Activated naive CD4-positive, alpha-beta T cell treated with anti-CD3 and anti-CD28 coated beads for 36 hours (primary cell): ENCODE measurements at regions of chrX and their contacts with region 1.

Region 1: DNA sequence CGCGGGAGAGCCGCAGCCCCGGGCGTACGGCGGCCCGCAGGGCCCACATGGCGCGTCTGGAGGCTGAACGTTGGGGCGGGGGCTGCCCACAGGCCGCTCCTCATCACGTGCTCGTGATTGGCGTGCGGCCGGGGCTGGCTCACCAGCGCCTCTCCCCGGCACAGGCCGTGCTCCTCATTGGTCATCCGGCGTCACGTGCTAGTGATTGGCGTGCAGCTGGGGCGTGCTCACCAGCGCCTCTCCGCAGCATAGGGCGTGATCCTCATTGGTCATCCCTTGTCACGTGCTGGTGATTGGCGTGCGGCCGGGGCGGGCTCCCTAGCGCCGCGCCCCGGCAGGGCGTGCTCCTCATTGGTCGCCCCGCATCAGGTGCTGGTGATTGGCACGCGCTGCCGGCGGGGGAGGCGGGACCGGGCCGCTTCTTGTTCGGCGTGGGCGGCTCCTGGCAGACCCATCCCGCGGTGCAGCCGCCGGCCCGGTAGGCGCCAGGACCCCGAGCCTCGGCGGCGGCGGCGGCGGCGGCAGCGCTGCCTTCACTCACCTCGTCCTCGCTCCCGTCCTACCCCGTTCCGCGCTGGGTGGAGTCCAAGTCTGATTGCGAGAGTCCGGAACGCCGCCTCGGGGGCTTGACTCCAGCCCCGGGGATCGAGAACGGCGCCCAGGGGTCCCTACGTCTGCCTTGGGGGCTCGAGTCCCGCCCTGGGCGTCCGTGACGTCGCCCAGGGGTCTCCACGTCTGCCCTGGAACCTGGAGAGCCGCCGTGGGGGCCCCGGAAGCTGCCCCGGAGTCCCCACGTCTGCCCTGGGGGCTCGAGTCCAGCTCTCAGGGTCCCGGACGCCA is at the start of gene GTPBP6:
- DNase-seq: peak; percentile 99
- H3K4me3 Mint-ChIP-seq: peak within 1 kb of the TSS; percentile 90
- H3K27ac Mint-ChIP-seq: peak within 1 kb of the TSS; percentile 98
- H3K4me1 Mint-ChIP-seq: peaks cover 18% of the 10 kb centered on the region
- H3K27me3 Mint-ChIP-seq: no peaks in the 10 kb centered on the region
- total RNA-seq, gene GTPBP6: 63.4 to 64.6 TPM

Region 2: DNA sequence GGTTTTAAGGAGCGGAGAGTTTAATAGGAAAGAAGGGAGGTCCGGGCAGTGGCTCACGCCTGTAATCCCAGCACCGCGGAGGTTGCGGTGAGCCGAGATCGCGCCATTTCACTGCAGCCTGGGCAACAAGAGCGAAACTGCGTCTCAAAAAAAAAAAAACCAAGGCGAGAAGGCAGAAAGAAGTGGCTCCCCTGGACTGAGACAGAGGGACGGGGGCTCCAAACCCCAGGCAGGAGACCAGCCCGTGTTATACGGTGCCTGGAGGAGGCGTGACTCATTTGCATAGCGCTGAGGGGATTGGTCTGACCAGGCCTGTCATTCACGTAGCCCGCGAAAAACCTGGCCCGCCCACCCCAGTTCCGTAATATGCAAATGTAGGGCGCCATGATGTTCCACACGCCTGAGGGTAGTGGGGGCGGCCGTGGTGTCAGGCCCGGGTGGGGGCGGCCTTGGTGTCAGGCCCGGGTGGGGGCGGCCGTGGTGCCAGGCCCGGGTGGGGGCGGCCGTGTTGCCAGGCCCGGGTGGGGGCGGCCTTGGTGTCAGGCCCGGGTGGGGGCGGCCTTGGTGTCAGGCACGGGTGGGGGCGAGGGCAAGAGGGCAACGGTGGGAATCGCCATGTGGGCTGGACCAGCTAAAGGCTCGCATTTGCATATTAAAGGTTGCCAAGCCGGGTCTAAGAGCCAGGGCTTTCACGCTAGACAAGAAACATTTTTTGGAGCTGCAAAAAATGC is 35.7 kb before region 1 on chrX:
- CTCF ChIA-PET with region 1: no interaction called
- intact Hi-C with region 1: loop called (anchors 1 kb)
- DNase-seq: peak; percentile 96
- H3K4me3 Mint-ChIP-seq: peak overlapping the region; percentile 96
- H3K27ac Mint-ChIP-seq: peak overlapping the region; percentile 98
- H3K4me1 Mint-ChIP-seq: peaks cover 34% of the 10 kb centered on the region
- H3K27me3 Mint-ChIP-seq: no peaks in the 10 kb centered on the region

Region 3: DNA sequence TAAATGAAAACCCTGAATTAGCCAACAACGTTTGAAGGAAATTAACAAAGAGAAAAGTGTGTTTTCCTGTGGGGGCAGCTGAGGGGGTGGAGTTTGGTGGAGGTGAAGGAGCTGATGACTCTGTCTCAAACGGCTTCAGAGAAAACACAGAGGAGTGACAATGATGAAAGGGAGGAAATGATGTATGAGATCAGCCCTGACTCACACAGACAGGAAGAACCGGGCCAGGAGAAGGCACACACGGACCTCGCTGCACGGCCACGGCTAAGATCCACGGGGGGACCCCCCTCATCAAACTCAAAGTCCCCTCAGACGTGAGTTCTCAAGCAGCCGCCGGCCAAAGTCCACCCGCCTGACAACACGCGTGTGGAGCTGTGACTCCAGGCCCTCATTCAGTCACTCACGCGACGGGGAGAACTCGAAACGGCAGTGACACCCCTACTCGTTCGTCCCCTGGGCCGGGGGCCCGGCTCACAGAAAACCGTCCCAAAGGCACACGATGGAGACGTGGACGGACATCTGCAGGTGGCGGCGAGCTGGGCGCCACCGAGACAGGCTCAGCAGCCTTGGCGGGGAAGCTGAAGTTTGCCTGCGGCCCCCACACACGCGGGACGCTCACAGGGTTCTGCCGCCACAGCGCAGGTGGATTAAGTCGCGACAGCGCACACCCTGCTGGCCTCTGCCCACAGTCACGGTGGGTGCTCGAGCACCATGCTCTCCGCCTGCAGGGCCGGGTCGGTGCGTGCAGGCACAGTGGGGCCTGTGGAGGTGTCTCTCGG is 38.9 kb after region 1 on chrX:
- CTCF ChIA-PET with region 1: no interaction called
- intact Hi-C with region 1: loop called (anchors 2 kb)
- DNase-seq: peak; percentile 72
- H3K4me3 Mint-ChIP-seq: peak overlapping the region; percentile 65
- H3K27ac Mint-ChIP-seq: peak overlapping the region; percentile 98
- H3K4me1 Mint-ChIP-seq: peaks cover 28% of the 10 kb centered on the region
- H3K27me3 Mint-ChIP-seq: no peaks in the 10 kb centered on the region

Region 4: DNA sequence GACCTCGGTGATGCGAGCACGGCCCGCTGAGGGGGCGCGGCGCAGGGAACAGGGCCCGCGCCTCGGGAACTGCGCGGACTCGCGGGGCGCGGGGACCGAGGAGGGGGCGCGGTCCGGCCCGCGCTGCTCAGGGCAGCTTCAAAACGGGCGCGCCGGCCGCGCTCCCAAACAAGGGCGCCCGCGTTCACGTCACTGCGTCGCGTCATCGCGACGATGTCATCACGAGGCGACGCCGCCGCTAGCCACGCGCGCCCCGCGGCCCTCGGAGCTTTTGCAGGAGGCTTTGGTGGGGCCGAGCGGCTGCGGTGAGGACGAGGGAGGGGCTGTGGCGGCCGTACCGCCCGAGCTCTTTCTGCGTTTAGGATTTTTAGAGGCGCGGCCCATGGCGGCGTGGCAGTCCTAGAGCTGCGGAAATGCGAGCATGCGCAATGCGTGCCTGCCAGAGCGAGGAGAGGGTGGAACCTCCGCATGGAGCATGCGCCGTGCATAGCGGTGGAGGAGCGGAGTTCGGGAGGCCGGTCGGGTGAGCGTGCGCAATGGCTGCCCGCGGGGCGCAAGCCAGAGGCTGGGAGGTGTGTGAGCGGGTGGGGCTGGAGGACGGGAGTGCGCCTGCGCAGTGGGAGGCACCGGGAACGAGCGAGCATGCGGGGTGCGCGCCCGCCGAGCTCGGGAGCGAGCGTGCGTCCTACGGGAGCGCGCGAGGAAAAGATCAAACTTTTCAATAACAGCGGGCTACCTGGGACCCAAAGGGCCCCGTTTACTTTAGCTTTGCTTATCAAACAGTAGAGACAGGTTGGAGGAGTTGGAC is 68.0 kb after region 1 on chrX and contains the start of gene PPP2R3B:
- CTCF ChIA-PET with region 1: no interaction called
- intact Hi-C with region 1: loop called (anchors 1 kb)
- DNase-seq: peak; percentile 98
- H3K4me3 Mint-ChIP-seq: peak within 1 kb of the TSS; percentile 82
- H3K27ac Mint-ChIP-seq: peak within 1 kb of the TSS; percentile 94
- H3K4me1 Mint-ChIP-seq: peaks cover 12% of the 10 kb centered on the region
- H3K27me3 Mint-ChIP-seq: no peaks in the 10 kb centered on the region
- total RNA-seq, gene PPP2R3B: 33.8 to 37.2 TPM

Region 5: DNA sequence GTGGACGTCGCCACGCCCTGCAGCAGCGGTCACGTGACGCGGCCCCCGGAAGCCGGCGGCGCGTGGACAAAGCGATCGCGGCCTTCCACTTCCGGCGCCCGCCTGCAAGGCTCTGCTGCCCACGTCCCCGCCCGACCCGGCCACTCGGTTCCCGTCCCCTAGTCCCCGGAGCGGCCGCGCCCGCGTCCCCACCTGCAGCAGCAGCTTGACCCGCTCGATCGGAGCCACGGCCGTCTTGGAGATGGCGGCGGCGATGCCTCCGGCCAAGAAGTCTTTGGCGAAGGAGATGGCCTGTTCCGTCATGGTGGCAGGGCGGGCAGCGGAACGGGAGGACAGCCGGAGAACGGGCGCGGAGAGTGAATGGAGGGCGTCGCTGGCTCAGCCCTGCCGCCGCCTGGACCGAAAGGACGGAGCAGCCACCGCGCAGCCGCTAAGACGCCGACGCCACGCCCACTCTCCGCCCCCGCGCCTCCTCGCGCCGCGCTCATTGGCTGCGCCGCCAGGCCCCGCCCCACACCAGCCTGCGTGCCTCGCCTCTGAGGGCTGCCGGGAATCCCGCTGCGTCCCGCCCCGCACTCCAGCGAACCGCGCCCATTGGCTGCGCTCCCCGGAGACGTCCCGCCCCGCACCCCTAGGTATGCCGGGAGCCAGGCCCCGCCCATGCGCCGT is 1072.9 kb after region 1 on chrX and contains the start of gene SLC25A6:
- CTCF ChIA-PET with region 1: no interaction called
- intact Hi-C with region 1: loop called (anchors 1 kb)
- DNase-seq: peak; percentile 99
- H3K4me3 Mint-ChIP-seq: peak within 1 kb of the TSS; percentile 91
- H3K27ac Mint-ChIP-seq: peak within 1 kb of the TSS; percentile 90
- H3K4me1 Mint-ChIP-seq: peaks cover 63% of the 10 kb centered on the region
- H3K27me3 Mint-ChIP-seq: no peaks in the 10 kb centered on the region
- total RNA-seq, gene SLC25A6: 457 to 463 TPM